ENCODE measurements at regions of chr3 and their contacts with region 1.

Region 1: DNA sequence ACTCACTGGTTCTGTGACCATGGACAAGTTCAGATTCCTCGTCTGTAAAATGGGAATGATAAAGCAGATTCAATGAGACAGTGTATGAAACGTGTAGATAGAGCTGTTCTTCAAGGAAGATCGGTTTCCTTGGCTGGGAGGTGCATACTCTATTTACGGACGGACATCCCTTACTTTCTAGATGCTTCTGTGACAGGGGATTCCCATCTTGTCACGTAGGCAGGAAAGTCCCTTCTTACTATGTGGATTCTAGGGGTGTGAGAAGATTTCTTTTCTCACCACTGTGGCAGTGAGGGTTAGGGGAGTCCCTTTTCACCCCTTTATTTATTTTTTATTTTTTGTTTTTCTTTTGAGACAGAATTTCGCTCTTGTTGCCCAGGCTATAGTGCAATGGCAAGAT is 180.9 kb upstream of the TBL1XR1 start:
- DNase-seq: no peak
- ATAC-seq: no peak

Region 2: GRCh38 chr3:177426878-177427495 is 48.8 kb after region 1 on chr3:
- intact Hi-C with region 1: loop called in 1 of 2 experiments (anchors 10 kb)
- DNase-seq: no peak
- ATAC-seq: no peak

Region 3: GRCh38 chr3:178385280-178385952 is 1007.2 kb after region 1 on chr3:
- intact Hi-C with region 1: loop called in 1 of 2 experiments (anchors 10 kb)
- DNase-seq: peak in 1 of 2 donors; percentile 6
- ATAC-seq: peak; percentile 66